ENCODE measurements at regions of chr9 and their contacts with region 1.

Region 1: GRCh38 chr9:101738566-101739183 is at the start of gene GRIN3A:
- DNase-seq: peak; percentile 11
- H3K4me3 ChIP-seq: peak within 1 kb of the TSS; percentile 20 to 38
- H3K27ac ChIP-seq: no peak within 1 kb of the TSS
- H3K4me1 ChIP-seq: no peaks in the 10 kb centered on the region
- H3K27me3 ChIP-seq: peaks cover 14% of the 10 kb centered on the region
- CTCF ChIP-seq: no peak
- POLR2A ChIP-seq: no peak
- total RNA-seq, gene GRIN3A: 0.80 to 1.5 TPM

Region 2: GRCh38 chr9:101601904-101602765 is 136.5 kb before region 1 on chr9:
- intact Hi-C with region 1: loop called (anchors 10 kb)
- DNase-seq: peak; percentile 12
- H3K4me3 ChIP-seq: no peak overlapping the region
- H3K27ac ChIP-seq: no peak overlapping the region
- H3K4me1 ChIP-seq: no peaks in the 10 kb centered on the region
- H3K27me3 ChIP-seq: no peaks in the 10 kb centered on the region
- CTCF ChIP-seq: peak in 3 of 4 experiments; percentile 53 to 69 (median 59)
- POLR2A ChIP-seq: no peak

Region 3: DNA sequence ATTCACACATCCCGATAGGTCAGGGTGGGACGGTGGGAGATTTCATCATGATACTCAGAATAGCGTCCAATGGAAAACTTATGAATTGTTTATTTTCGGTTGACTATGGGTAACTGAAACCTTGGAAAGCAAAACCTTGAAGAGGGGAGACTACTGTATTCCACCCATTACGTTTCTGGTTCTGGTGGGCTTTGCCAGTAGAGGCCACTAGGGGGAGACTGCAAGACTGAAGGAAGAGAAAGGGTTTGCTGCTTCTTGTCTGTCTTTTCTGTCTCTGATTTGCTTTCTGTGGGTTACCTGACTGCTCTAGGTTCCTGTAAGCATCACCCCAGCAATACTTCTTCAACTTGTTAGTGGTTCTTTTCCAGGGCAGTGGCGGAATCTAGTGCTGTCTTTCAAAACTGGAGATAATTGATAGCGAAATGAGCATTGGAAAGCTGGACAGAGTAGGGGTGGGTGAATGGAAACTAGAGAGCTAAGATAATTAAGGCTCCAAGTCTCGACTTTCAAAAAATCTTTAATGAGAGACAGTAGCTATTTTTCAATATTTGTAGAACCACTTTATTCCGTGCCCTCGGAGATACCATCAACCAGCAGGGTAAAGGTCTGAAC is 27.2 kb before region 1 on chr9:
- intact Hi-C with region 1: no loop called
- DNase-seq: no peak
- H3K4me3 ChIP-seq: no peak overlapping the region
- H3K27ac ChIP-seq: no peak overlapping the region
- H3K4me1 ChIP-seq: no peaks in the 10 kb centered on the region
- H3K27me3 ChIP-seq: no peaks in the 10 kb centered on the region
- CTCF ChIP-seq: no peak
- POLR2A ChIP-seq: no peak

Measured in prostate gland (tissue), 2 donors.